ENCODE measurements at regions of chr6 and their contacts with region 1.

Region 1: GRCh38 chr6:3270258-3270657 is 11.5 kb downstream of the PSMG4 start:
- DNase-seq: no peak
- ATAC-seq: no peak
- H3K4me3 ChIP-seq: no peak overlapping the region
- H3K27ac ChIP-seq: no peak overlapping the region
- H3K4me1 ChIP-seq: peaks cover 7% of the 10 kb centered on the region; the same call in 1 of the 2 replicates
- H3K27me3 ChIP-seq: no peaks in the 10 kb centered on the region
- CTCF ChIP-seq: no peak
- POLR2A ChIP-seq: no peak
- RAD21 ChIP-seq: no peak

Region 2: GRCh38 chr6:2363211-2363610 is 907.0 kb before region 1 on chr6:
- CTCF ChIA-PET with region 1: no interaction called
- POLR2A ChIA-PET with region 1: no interaction called
- dilution Hi-C with region 1: no loop called
- in situ Hi-C with region 1: no loop called
- intact Hi-C with region 1: no loop called
- DNase-seq: peak; percentile 12
- ATAC-seq: no peak
- H3K4me3 ChIP-seq: no peak overlapping the region
- H3K27ac ChIP-seq: no peak overlapping the region
- H3K4me1 ChIP-seq: peaks cover 2% of the 10 kb centered on the region; the same call in 1 of the 2 replicates
- H3K27me3 ChIP-seq: no peaks in the 10 kb centered on the region
- CTCF ChIP-seq: no peak
- POLR2A ChIP-seq: no peak
- RAD21 ChIP-seq: no peak

Region 3: DNA sequence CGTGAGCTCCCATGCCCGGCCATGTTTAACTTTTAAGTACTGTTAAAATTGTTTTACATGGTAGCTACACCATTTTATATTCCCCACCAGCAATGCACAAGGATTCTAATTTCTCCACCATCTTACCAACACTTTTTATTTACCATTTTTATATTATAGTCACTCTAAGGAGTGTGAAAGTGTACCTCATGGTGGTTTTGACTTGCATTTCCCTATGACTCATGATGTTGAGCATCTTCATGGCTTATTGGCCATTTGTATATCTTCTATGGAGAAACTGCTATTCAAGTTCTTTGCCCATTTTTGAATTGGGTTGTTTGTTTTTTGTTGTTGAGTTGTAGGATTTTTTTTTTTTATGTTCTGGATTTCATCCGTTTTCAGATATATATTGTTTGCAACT is 167.4 kb before region 1 on chr6:
- CTCF ChIA-PET with region 1: no interaction called
- POLR2A ChIA-PET with region 1: no interaction called
- dilution Hi-C with region 1: no loop called
- in situ Hi-C with region 1: no loop called
- intact Hi-C with region 1: no loop called
- DNase-seq: peak; percentile 28
- ATAC-seq: 0 out of 2 replicates have a peak, but pooled peaks have one; percentile 29
- H3K4me3 ChIP-seq: no peak overlapping the region
- H3K27ac ChIP-seq: no peak overlapping the region
- H3K4me1 ChIP-seq: peaks cover 5% of the 10 kb centered on the region; the same call in 1 of the 2 replicates
- H3K27me3 ChIP-seq: no peaks in the 10 kb centered on the region
- CTCF ChIP-seq: no peak
- POLR2A ChIP-seq: no peak
- RAD21 ChIP-seq: no peak

Region 4: GRCh38 chr6:3176562-3177355 is 93.5 kb before region 1 on chr6:
- CTCF ChIA-PET with region 1: no interaction called
- POLR2A ChIA-PET with region 1: no interaction called
- dilution Hi-C with region 1: no loop called
- in situ Hi-C with region 1: no loop called
- intact Hi-C with region 1: no loop called
- DNase-seq: peak; percentile 98
- ATAC-seq: peak; percentile 97
- H3K4me3 ChIP-seq: no peak overlapping the region
- H3K27ac ChIP-seq: no peak overlapping the region
- H3K4me1 ChIP-seq: no peaks in the 10 kb centered on the region
- H3K27me3 ChIP-seq: peaks cover 3% of the 10 kb centered on the region; the same call in 1 of the 2 replicates
- CTCF ChIP-seq: no peak
- POLR2A ChIP-seq: no peak
- RAD21 ChIP-seq: no peak

Region 5: GRCh38 chr6:3797231-3798054 is 527.2 kb after region 1 on chr6:
- CTCF ChIA-PET with region 1: no interaction called
- POLR2A ChIA-PET with region 1: no interaction called
- dilution Hi-C with region 1: no loop called
- in situ Hi-C with region 1: no loop called
- intact Hi-C with region 1: no loop called
- DNase-seq: peak; percentile 79
- ATAC-seq: peak; percentile 69
- H3K4me3 ChIP-seq: peak overlapping the region; percentile 8; the same call in 1 of the 2 replicates
- H3K27ac ChIP-seq: peak overlapping the region; percentile 93
- H3K4me1 ChIP-seq: peaks cover 19% of the 10 kb centered on the region
- H3K27me3 ChIP-seq: no peaks in the 10 kb centered on the region
- CTCF ChIP-seq: no peak
- POLR2A ChIP-seq: no peak
- RAD21 ChIP-seq: no peak

Region 6: DNA sequence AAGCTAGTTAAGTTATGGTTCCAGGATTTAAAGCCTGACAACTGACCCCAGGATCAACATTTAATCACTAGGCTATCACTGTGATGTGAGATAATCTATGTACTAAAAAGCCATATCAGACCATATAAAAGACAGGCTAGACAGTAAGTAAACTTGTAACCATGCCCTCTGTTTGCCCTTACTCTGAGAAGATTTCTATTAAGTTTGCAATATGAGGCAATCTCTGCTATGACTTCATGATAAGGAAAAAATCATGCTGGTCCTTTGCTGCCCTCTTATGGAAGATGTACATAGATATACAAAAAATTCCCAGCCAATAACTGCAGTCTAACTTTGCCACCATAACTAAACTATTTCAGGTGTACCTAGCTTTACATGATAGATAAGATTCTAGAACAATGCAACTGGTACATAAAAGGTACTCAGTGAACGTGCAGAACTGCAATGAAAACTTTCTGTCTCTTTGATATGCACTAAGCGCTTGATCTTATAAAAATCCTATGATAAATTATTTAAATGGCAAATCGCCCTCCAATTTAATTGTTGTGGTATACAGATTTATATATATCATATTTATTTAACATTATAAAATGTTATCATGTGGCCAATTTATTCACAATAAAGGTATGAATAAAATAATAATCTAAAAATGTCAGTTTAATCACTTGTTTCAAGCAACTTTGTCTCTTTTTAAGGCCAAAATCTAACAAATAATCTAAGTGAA is 738.2 kb after region 1 on chr6:
- CTCF ChIA-PET with region 1: no interaction called
- POLR2A ChIA-PET with region 1: no interaction called
- dilution Hi-C with region 1: no loop called
- in situ Hi-C with region 1: loop called (anchors 5 kb)
- intact Hi-C with region 1: no loop called
- DNase-seq: peak; percentile 92
- ATAC-seq: peak; percentile 87
- H3K4me3 ChIP-seq: no peak overlapping the region
- H3K27ac ChIP-seq: no peak overlapping the region
- H3K4me1 ChIP-seq: no peaks in the 10 kb centered on the region
- H3K27me3 ChIP-seq: no peaks in the 10 kb centered on the region
- CTCF ChIP-seq: peak; percentile 84
- POLR2A ChIP-seq: no peak
- RAD21 ChIP-seq: peak; percentile 84